Heart right ventricle (tissue), 16 donors: ENCODE measurements at regions of chrX and their contacts with region 1.

Region 1: GRCh38 chrX:75522565-75523431 is at the start of gene ZDHHC15:
- DNase-seq: peak; percentile 43 to 60
- ATAC-seq: peak; percentile 87 to 100 (median 97)
- H3K4me3 ChIP-seq: peak within 1 kb of the TSS; percentile 14 to 71 (median 58)
- H3K27ac ChIP-seq: peak within 1 kb of the TSS in 9 of 10 donors; percentile 50 to 83 (median 68)
- H3K4me1 ChIP-seq: peaks cover 0 to 12% (median 0%) of the 10 kb centered on the region in 9 donors
- H3K27me3 ChIP-seq: no peaks in the 10 kb centered on the region
- CTCF ChIP-seq: peak in 2 of 9 donors; percentile 15 to 21
- total RNA-seq, gene ZDHHC15: 2.3 to 4.4 (median 2.9) TPM

Region 2: DNA sequence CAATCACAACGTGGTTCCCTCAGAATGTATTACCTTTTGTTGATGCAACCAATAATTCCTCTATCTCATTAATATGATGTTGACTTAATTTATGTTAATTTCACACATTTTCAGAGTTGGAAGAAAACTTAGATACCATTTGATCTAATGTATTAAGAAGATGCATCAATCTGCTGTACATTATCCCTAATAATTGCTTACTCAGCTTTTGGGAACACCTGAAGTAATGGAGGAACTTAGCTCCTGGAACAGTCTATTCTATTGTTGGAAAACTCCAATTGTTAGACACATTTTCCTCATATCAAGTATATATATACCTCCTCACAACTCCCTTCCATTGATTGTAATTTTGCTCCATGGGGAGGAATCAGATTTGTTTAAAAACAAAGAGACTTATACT is 38.9 kb before region 1 on chrX:
- intact Hi-C with region 1: no loop called
- DNase-seq: no peak
- ATAC-seq: no peak
- H3K4me3 ChIP-seq: no peak overlapping the region
- H3K27ac ChIP-seq: no peak overlapping the region
- H3K4me1 ChIP-seq: no peaks in the 10 kb centered on the region
- H3K27me3 ChIP-seq: peaks cover 0 to 16% (median 0%) of the 10 kb centered on the region in 7 donors
- CTCF ChIP-seq: no peak

Region 3: GRCh38 chrX:75596178-75596577 is 73.4 kb after region 1 on chrX:
- intact Hi-C with region 1: loop called in 2 of 10 experiments (anchors 5 to 10 kb)
- DNase-seq: peak in 1 of 2 donors; percentile 36
- ATAC-seq: peak; percentile 84 to 98 (median 91)
- H3K4me3 ChIP-seq: no peak overlapping the region
- H3K27ac ChIP-seq: peak overlapping the region in 6 of 10 donors; percentile 4 to 72 (median 65)
- H3K4me1 ChIP-seq: peaks cover 0 to 8% (median 0%) of the 10 kb centered on the region in 9 donors
- H3K27me3 ChIP-seq: no peaks in the 10 kb centered on the region
- CTCF ChIP-seq: no peak